ENCODE measurements at regions of chr22 and their contacts with region 1.

Region 1: GRCh38 chr22:45218976-45219375 is 21.7 kb downstream of the KIAA0930 start:
- DNase-seq: peak; percentile 80
- CTCF ChIP-seq: no peak

Region 2: GRCh38 chr22:45082795-45083194 is 136.2 kb before region 1 on chr22:
- CTCF ChIA-PET with region 1: no interaction called
- POLR2A ChIA-PET with region 1: no interaction called
- DNase-seq: no peak
- CTCF ChIP-seq: peak; percentile 24

Region 3: DNA sequence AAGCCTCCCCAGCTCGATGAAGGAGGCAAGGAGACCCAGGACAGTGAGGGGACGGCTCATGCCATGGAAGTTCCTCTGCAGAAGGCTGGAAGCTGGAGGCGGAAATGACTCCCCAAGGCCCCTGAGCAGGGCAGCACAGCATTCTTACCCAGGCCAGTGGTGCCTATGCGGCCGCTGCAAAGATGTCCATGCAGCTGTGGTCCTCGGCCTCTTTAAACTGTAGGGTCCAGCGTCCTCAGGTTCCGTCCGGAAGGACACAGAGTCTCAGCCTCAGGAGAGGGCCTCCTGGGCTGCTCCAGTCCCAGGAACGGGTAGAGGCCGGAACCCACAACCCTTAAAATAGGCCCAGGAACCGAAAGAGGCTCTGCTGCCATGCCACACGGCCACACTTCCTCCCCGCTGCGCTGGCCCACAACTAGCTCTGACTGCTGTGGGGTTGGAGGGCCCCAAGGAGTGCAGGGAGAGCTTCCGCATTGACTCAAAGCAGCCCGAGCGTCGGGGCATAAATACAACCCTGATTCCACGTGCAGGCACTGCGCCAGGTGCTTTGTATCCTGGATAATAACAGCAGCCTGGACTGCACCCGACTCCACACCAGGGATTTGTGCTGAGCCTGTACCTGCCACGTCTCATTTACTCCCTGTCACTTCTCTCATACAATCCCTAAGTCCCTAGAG is 16.3 kb after region 1 on chr22:
- CTCF ChIA-PET with region 1: interaction called, 16 read pairs
- POLR2A ChIA-PET with region 1: no interaction called
- DNase-seq: peak; percentile 75
- CTCF ChIP-seq: no peak

Measured in GM10248 (cell line).